Transverse colon (tissue), 4 donors: ENCODE measurements at regions of chr13 and their contacts with region 1.

Region 1: GRCh38 chr13:71577127-71577526 is 289.9 kb downstream of the DACH1 start:
- DNase-seq: no peak
- H3K4me3 ChIP-seq: no peak overlapping the region
- H3K27ac ChIP-seq: no peak overlapping the region
- H3K4me1 ChIP-seq: no peaks in the 10 kb centered on the region
- H3K27me3 ChIP-seq: no peaks in the 10 kb centered on the region
- CTCF ChIP-seq: no peak
- EP300 ChIP-seq: no peak
- POLR2A ChIP-seq: no peak

Region 2: DNA sequence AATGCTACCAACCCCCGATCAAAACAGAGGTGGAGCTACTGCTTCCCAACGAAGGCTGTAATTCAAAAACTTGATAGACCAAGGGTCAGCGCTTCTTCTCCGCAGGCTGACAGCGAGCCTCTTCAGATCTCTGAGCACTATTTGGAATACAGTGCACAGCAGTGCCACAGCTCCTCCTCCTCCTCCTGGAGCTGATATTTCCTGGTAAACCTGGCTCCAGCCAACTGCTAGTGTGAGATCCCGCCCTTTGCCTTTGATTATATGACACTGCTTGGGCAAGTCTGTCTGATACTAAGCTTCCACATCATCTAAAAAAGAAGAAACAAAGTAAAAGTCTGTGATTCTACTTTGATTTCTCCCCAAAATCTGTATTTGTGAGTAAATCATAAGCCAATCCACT is 420.6 kb before region 1 on chr13:
- in situ Hi-C with region 1: no loop called
- intact Hi-C with region 1: no loop called
- DNase-seq: no peak
- H3K4me3 ChIP-seq: no peak overlapping the region
- H3K27ac ChIP-seq: no peak overlapping the region
- H3K4me1 ChIP-seq: no peaks in the 10 kb centered on the region
- H3K27me3 ChIP-seq: no peaks in the 10 kb centered on the region
- CTCF ChIP-seq: no peak
- EP300 ChIP-seq: no peak
- POLR2A ChIP-seq: no peak

Region 3: GRCh38 chr13:72970956-72971355 is 1393.8 kb after region 1 on chr13:
- in situ Hi-C with region 1: no loop called
- intact Hi-C with region 1: loop called (anchors 10 kb)
- DNase-seq: no peak
- H3K4me3 ChIP-seq: peak overlapping the region in 1 of 4 donors; percentile 2
- H3K27ac ChIP-seq: peak overlapping the region; percentile 60 to 73 (median 69)
- H3K4me1 ChIP-seq: peaks cover 0 to 18% (median 3%) of the 10 kb centered on the region in 4 donors
- H3K27me3 ChIP-seq: no peaks in the 10 kb centered on the region
- CTCF ChIP-seq: no peak
- EP300 ChIP-seq: no peak
- POLR2A ChIP-seq: no peak